Posterior vena cava (tissue), 2 donors: ENCODE measurements at regions of chr11 and their contacts with region 1.

Region 1: GRCh38 chr11:83441171-83441570 is 155.0 kb upstream of the CCDC90B start:
- DNase-seq: no peak

Region 2: DNA sequence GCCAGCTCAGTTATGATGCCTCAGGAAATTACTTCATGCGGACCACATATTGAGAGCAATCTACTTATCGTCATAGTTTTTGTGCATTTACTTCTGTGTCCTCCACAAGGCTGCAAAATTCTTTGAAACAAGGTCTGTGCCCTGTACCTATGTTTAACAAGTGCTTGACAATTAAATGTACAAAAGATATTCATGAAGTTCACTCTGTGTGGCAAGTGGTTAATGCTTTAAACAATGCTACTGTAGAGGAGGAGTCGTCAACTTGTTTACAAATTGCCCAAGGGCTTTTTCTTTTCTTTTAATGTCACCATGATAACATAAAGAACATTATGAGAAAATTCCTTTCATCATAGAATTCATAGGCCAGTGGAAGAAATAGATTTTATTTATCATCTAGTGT is 716.5 kb after region 1 on chr11:
- intact Hi-C with region 1: loop called in 1 of 2 experiments (anchors 5 kb)
- DNase-seq: no peak